SK-MEL-5 (cell line): ENCODE measurements at regions of chr3 and their contacts with region 1.

Region 1: GRCh38 chr3:132253262-132253878 is 63.8 kb upstream of the ACP3 start:
- DNase-seq: peak; percentile 76

Region 2: DNA sequence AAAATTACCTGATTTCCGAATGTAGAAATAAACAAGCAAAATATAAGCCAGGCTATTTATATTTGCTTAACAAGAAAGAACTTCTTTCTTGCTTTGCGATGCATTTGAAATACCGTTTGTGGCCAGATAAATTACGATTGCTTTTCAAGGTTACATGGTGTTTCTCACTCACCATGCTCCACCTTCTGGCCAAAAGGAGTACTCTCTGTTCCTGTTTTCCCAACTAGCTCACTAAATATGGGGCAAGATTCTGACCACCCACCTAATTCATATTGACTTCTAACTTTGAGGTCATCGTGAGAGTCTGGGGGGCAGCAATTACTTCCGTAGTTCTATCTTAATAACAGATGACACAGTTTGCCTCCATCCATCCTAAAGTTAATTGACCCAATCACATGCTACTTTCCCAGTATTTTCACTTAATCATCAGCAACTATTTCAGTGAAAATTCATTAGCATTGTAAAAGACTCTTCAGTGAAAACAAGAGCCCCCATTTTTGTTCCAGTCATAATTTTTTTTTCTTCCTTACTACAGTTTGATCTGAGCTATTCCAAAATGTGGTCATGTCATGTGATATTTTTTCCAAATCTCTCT is 89.7 kb after region 1 on chr3:
- in situ Hi-C with region 1: loop called (anchors 10 kb)
- DNase-seq: peak; percentile 77